GM12878 (cell line): ENCODE measurements at regions of chr18 and their contacts with region 1.

Region 1: DNA sequence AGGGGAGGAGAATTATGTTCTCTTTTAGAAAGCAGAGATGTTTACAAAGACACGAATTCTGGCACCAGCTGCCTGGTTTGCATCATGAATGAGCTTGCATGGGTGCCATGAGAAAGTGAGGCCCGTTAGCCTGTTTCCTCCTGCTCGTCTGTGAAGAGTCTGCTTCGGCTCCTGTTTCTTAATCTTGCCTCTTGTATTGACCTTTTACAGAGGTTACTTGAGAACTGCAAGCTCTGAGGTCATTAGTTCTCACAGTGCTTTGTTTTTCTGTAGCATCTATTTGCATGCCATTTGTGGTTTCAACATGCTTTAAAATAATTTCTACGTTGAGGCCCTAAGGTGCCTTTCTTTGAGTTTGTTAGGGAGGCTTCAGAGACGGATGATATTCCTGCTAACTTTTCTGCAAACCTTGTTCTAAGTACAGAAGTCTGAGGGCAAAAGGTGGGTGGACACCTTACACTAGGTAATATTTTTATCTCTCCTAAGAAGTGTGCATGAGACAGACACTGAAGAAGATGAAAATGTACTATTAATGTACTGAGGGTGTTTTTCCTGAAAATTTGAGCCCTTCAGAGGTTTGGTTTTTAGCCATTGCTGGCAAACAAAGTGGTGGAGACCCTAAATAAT is 53.4 kb upstream of the LINC00305 start:
- DNase-seq: peak; percentile 12
- ATAC-seq: peak; percentile 77
- H3K4me3 ChIP-seq: no peak overlapping the region
- H3K27ac ChIP-seq: no peak overlapping the region
- H3K4me1 ChIP-seq: no peaks in the 10 kb centered on the region
- H3K27me3 ChIP-seq: no peaks in the 10 kb centered on the region
- CTCF ChIP-seq: no peak
- EP300 ChIP-seq: no peak
- POLR2A ChIP-seq: no peak
- RAD21 ChIP-seq: no peak

Region 2: GRCh38 chr18:64100116-64100922 is 102.0 kb before region 1 on chr18:
- CTCF ChIA-PET with region 1: interaction called, 6 read pairs
- POLR2A ChIA-PET with region 1: interaction called, 3 read pairs
- RAD21 ChIA-PET with region 1: interaction called, 16 read pairs
- SMC1A ChIA-PET with region 1: interaction called, 40 read pairs
- in situ Hi-C with region 1: no loop called
- intact Hi-C with region 1: loop called (anchors 2 kb)
- DNase-seq: peak; percentile 33
- ATAC-seq: peak; percentile 74
- H3K4me3 ChIP-seq: no peak overlapping the region
- H3K27ac ChIP-seq: no peak overlapping the region
- H3K4me1 ChIP-seq: no peaks in the 10 kb centered on the region; the same call in 1 of the 2 replicates
- H3K27me3 ChIP-seq: no peaks in the 10 kb centered on the region
- CTCF ChIP-seq: no peak
- EP300 ChIP-seq: 0 out of 4 replicates have a peak, but pooled peaks of 1 of the 2 experiments have one; percentile 8
- POLR2A ChIP-seq: no peak
- RAD21 ChIP-seq: no peak

Region 3: DNA sequence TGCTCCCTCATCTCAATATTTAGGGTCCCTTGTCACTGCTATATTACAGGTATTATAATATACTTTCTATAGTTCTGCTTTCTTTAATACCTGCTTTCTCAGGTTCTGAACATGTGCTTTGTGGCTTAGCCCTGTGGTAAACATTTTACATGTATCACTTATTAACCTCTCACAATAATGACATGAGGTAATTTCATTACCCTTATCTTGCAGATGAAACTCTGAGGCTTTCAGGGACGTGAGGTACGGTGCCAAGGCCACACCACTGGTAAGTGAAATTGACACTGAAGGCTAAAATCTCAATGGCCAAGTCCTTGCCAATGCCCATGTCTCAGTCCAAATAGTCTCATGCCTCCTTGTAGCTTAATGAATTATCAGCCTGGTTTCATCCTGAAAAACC is 75.2 kb before region 1 on chr18:
- CTCF ChIA-PET with region 1: interaction called, 5 read pairs
- POLR2A ChIA-PET with region 1: interaction called, 3 read pairs
- RAD21 ChIA-PET with region 1: interaction called, 8 read pairs
- SMC1A ChIA-PET with region 1: interaction called, 23 read pairs
- in situ Hi-C with region 1: no loop called
- intact Hi-C with region 1: loop called (anchors 5 kb)
- DNase-seq: peak; percentile 2
- ATAC-seq: peak; percentile 97
- H3K4me3 ChIP-seq: no peak overlapping the region
- H3K27ac ChIP-seq: no peak overlapping the region
- H3K4me1 ChIP-seq: no peaks in the 10 kb centered on the region
- H3K27me3 ChIP-seq: no peaks in the 10 kb centered on the region
- CTCF ChIP-seq: no peak
- EP300 ChIP-seq: 0 out of 4 replicates have a peak, but pooled peaks of 1 of the 2 experiments have one; percentile 29
- POLR2A ChIP-seq: no peak
- RAD21 ChIP-seq: no peak

Region 4: GRCh38 chr18:64191069-64191468 is 11.3 kb before region 1 on chr18:
- CTCF ChIA-PET with region 1: interaction called, 4 read pairs
- POLR2A ChIA-PET with region 1: interaction called, 5 read pairs
- RAD21 ChIA-PET with region 1: interaction called, 34 read pairs
- SMC1A ChIA-PET with region 1: interaction called, 28 read pairs
- in situ Hi-C with region 1: no loop called
- intact Hi-C with region 1: no loop called
- DNase-seq: no peak
- ATAC-seq: peak; percentile 55
- H3K4me3 ChIP-seq: no peak overlapping the region
- H3K27ac ChIP-seq: no peak overlapping the region
- H3K4me1 ChIP-seq: no peaks in the 10 kb centered on the region
- H3K27me3 ChIP-seq: no peaks in the 10 kb centered on the region
- CTCF ChIP-seq: no peak
- EP300 ChIP-seq: no peak
- POLR2A ChIP-seq: no peak
- RAD21 ChIP-seq: no peak